Mammary epithelial cell (primary cell): ENCODE measurements at regions of chr19 and their contacts with region 1.

Region 1: DNA sequence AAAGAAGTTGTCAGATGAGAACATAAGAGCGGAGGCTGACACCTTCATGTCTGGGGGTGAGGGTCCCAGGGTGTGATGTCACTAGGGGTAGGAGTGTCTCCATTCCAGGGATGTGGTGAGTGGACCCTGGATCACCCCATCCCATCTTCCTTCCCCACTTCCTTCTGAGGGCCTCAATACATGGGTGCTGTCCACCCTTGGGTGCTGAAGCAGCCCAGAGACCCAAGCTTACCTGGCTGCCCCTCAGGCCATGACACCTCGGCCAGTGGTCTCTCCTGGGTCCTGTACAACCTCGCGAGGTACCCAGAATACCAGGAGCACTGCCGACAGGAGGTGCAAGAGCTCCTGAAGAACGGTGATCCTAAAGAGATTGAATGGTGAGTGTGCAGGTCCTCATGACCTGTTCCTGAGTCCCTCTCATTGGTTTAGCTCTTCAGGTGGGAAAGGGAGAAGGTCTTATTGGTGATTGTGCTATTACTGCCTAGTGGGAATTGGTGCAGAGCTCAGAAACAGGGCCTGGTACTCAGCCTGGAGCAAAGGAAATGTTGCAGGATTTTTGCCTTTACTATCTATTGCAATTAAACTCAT is 37.7 kb upstream of the CYP4F8 start:
- DNase-seq: no peak
- H3K4me3 ChIP-seq: no peak overlapping the region
- H3K27ac ChIP-seq: no peak overlapping the region
- H3K4me1 ChIP-seq: no peaks in the 10 kb centered on the region
- H3K27me3 ChIP-seq: no peaks in the 10 kb centered on the region
- CTCF ChIP-seq: no peak

Region 2: GRCh38 chr19:15161028-15161989 is 416.0 kb before region 1 on chr19:
- CTCF ChIA-PET with region 1: no interaction called
- dilution Hi-C with region 1: no loop called
- in situ Hi-C with region 1: loop called in 1 of 2 experiments (anchors 10 kb)
- intact Hi-C with region 1: no loop called
- DNase-seq: no peak
- H3K4me3 ChIP-seq: no peak overlapping the region
- H3K27ac ChIP-seq: no peak overlapping the region
- H3K4me1 ChIP-seq: no peaks in the 10 kb centered on the region
- H3K27me3 ChIP-seq: no peaks in the 10 kb centered on the region
- CTCF ChIP-seq: peak; percentile 32 to 52

Region 3: DNA sequence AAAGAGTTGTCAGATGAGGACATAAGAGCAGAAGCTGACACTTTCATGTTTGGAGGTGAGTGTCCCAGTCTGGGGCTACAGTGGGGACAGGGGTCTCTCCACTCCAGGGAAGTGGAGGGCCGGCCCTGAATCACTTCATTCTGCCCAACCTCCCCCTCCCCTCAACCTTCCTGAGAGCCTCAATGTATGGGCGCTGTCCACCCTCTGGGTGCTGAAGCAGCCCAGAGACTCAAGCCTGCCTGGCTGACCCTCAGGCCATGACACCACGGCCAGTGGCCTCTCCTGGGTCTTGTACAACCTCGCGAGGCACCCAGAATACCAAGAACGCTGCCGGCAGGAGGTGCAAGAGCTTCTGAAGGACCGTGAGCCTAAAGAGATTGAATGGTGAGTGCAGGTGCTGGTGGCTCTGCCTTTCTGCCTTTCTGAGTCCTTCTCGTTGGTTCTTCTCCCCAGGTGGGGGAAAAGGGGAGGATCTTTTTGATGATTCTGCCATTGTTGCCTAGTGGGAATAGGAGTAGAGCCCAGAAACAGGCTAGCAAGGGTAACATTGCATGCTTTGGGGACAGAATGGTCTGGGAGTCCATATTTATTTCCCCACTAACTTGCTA is 46.5 kb after region 1 on chr19:
- CTCF ChIA-PET with region 1: no interaction called
- dilution Hi-C with region 1: loop called (anchors 5 kb)
- in situ Hi-C with region 1: no loop called
- intact Hi-C with region 1: no loop called
- DNase-seq: no peak
- H3K4me3 ChIP-seq: no peak overlapping the region
- H3K27ac ChIP-seq: no peak overlapping the region
- H3K4me1 ChIP-seq: no peaks in the 10 kb centered on the region
- H3K27me3 ChIP-seq: no peaks in the 10 kb centered on the region
- CTCF ChIP-seq: no peak